Activated T-helper 1 cell treated with anti-CD3 and anti-CD28 coated beads, Interleukin-12 subunit alpha, Interleukin-12 subunit beta, Interleukin-2, Interleukin-4 antibody, amounts not matched to agents 30 ng/mL and 10 ng/mL and 1 ng/mL, durations not matched to agents 14 hours and 24 hours and 36 hours (primary cell): ENCODE measurements at regions of chr9 and their contacts with region 1.

Region 1: GRCh38 chr9:38088006-38088925 is 19.2 kb upstream of the SHB start:
- DNase-seq: peak; percentile 55
- H3K4me3 Mint-ChIP-seq: no peak overlapping the region
- H3K27ac Mint-ChIP-seq: no peak overlapping the region
- H3K4me1 Mint-ChIP-seq: peaks cover 5% of the 10 kb centered on the region
- H3K27me3 Mint-ChIP-seq: peaks cover 22% of the 10 kb centered on the region

Region 2: GRCh38 chr9:37746848-37747753 is 341.2 kb before region 1 on chr9:
- intact Hi-C with region 1: loop called (anchors 5 kb)
- DNase-seq: peak; percentile 24
- H3K4me3 Mint-ChIP-seq: no peak overlapping the region
- H3K27ac Mint-ChIP-seq: no peak overlapping the region
- H3K4me1 Mint-ChIP-seq: no peaks in the 10 kb centered on the region
- H3K27me3 Mint-ChIP-seq: peaks cover 6% of the 10 kb centered on the region

Region 3: GRCh38 chr9:38160613-38161215 is 72.4 kb after region 1 on chr9:
- intact Hi-C with region 1: loop called (anchors 1 kb)
- DNase-seq: peak; percentile 30
- H3K4me3 Mint-ChIP-seq: no peak overlapping the region
- H3K27ac Mint-ChIP-seq: no peak overlapping the region
- H3K4me1 Mint-ChIP-seq: no peaks in the 10 kb centered on the region
- H3K27me3 Mint-ChIP-seq: no peaks in the 10 kb centered on the region

Region 4: DNA sequence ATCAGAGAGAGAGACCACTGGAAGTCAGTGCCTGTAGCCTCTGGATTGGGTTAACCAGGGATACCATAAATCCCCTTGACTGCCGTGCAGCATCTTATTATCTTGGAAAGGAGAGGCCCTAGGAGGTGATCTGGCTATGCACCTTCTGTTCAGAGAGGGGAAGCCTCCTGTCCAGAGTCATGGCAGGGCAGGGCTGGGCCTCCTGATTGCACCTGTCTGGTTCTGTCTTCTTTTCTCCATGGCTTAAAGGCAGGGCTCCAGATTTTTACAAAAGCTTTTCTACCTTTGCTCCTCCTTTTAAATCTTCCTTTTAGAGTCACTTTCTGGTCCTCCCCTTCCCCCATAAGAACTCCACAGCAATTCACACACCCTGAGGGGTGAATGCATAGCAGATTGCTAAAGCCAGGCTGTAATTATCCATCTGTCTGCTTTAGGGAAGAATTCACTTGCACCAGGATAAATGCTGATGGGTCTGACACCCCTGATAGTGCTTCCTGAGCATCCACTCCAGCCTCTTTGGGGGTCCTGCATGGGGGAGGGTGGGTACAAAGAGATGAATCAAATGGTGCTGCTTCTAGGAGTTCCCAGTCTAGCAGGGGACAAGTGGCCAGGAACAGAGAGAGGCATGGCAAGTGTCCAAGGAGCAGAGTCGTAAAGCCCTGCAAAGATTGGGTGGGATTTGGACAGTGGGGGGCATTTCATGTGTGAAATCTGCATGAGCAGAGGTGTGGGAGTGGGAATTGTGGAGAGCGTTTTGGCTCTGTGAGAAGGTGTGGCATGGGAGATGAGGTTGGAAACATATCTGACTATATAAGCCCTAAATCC is 163.0 kb after region 1 on chr9:
- intact Hi-C with region 1: no loop called
- DNase-seq: no peak
- H3K4me3 Mint-ChIP-seq: no peak overlapping the region
- H3K27ac Mint-ChIP-seq: no peak overlapping the region
- H3K4me1 Mint-ChIP-seq: no peaks in the 10 kb centered on the region
- H3K27me3 Mint-ChIP-seq: no peaks in the 10 kb centered on the region

Region 5: DNA sequence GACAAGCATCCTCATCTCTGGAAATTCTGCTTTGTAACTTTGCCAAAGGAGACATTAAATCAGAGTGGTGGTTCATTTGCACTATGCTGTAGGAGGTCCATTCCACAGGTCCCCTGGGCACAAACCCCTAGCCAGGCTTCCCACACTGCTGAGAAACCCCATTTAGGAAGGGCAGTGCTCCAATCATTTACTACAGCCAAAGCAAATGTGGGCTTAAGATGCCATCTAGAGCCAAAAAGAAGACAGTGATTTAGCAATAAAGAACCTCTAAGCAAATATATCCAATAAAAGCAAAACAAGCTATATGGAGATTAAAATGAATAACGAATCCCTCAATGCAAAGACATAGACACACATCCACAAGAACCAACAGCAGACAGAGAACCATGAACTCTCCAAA is 175.3 kb after region 1 on chr9:
- intact Hi-C with region 1: loop called (anchors 10 kb)
- DNase-seq: no peak
- H3K4me3 Mint-ChIP-seq: no peak overlapping the region
- H3K27ac Mint-ChIP-seq: no peak overlapping the region
- H3K4me1 Mint-ChIP-seq: no peaks in the 10 kb centered on the region
- H3K27me3 Mint-ChIP-seq: peaks cover 11% of the 10 kb centered on the region

Region 6: DNA sequence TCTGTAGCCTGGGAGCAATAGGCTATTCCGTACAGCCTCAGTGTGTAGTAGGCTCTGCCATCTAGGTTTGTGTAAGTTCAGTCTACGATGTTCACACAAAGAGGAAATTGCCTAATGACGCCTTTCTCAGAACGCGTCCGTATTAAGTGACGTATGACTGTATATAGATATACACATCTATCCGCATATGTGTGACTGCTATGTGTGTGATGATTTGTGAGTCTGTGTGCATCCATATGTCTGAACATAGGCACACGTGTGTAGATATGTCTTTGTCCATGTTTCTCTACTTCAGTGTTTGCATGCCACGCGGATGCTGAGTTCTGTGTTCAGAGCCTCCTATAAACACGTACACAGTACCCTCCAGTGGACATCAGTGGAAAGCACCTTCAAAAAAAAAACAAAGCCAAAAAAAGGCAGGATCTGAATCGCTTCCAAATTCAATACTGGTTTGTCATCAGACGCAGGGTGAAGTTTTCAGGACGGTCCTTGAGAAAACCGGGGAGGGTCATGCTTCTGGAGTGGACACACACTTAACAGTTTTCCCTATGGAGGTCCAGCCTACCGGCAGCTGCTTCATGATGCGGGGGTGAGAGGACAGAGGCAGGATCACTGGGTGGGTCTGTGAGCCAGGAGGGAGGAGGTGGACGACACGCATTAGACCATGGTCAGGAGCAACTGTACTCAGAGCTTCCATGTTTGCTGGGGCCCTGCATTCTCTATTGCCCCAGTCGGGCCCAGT is 274.8 kb after region 1 on chr9:
- intact Hi-C with region 1: loop called (anchors 1 kb)
- DNase-seq: no peak
- H3K4me3 Mint-ChIP-seq: peak overlapping the region; percentile 49
- H3K27ac Mint-ChIP-seq: no peak overlapping the region
- H3K4me1 Mint-ChIP-seq: no peaks in the 10 kb centered on the region
- H3K27me3 Mint-ChIP-seq: peaks cover 2% of the 10 kb centered on the region